ENCODE measurements at regions of chr10 and their contacts with region 1.

Region 1: DNA sequence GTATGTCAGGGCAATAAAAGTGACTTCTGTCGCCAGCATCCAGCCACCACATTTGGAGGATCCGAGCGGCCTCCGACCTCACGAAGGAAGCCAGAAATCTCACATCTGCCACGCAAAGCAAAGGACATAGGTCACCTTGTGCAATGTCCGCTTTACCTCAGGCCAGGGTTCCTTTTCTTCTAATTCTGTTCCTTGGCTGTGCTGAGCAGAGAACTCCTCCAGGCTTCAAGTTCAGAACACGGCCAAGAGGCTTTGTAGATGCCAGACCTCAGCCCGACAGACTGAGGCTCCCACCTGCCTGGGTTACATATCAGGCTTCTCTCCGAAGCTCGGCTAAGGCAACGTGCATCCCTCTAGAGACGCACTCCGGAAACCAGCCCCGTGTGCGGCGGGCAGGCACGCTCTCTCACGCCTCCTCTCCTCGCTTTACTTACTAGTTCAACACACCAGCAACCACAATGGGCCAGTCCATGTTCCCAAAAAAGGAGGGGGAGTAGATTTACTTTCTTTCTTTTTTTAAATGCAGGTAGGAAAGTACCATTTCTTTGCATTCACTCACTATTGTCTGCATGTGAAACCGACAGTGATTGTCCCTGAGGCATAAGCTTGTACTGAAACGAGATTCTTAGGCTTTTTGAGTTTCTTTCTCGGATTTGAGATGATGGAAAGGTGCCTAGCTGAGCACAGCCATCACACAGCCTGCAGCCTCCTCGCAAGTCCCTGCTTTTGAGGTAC is 122.4 kb upstream of the AFAP1L2 start:
- DNase-seq: peak; percentile 95
- H3K4me3 Mint-ChIP-seq: peak overlapping the region; percentile 94
- H3K27ac Mint-ChIP-seq: peak overlapping the region; percentile 99
- H3K4me1 Mint-ChIP-seq: peaks cover 47% of the 10 kb centered on the region
- H3K27me3 Mint-ChIP-seq: no peaks in the 10 kb centered on the region

Region 2: GRCh38 chr10:113854011-113854760 is 672.5 kb before region 1 on chr10 and contains the starts of genes DCLRE1A and NHLRC2:
- CTCF ChIA-PET with region 1: no interaction called
- intact Hi-C with region 1: loop called (anchors 5 kb)
- DNase-seq: peak; percentile 67
- H3K4me3 Mint-ChIP-seq: peak within 1 kb of the TSS; percentile 95
- H3K27ac Mint-ChIP-seq: peak within 1 kb of the TSS; percentile 98
- H3K4me1 Mint-ChIP-seq: peaks cover 35% of the 10 kb centered on the region
- H3K27me3 Mint-ChIP-seq: no peaks in the 10 kb centered on the region
- total RNA-seq, gene DCLRE1A: 8.1 to 8.7 TPM
- total RNA-seq, gene NHLRC2: 12.6 to 13.9 TPM

Region 3: GRCh38 chr10:114173921-114174694 is 352.6 kb before region 1 on chr10 and contains the start of gene CCDC186:
- CTCF ChIA-PET with region 1: no interaction called
- intact Hi-C with region 1: loop called (anchors 2 kb)
- DNase-seq: peak; percentile 99
- H3K4me3 Mint-ChIP-seq: peak within 1 kb of the TSS; percentile 98
- H3K27ac Mint-ChIP-seq: peak within 1 kb of the TSS; percentile 93
- H3K4me1 Mint-ChIP-seq: peaks cover 27% of the 10 kb centered on the region
- H3K27me3 Mint-ChIP-seq: no peaks in the 10 kb centered on the region
- total RNA-seq, gene CCDC186: 10.3 to 13.7 TPM

Region 4: GRCh38 chr10:114479307-114479706 is 47.4 kb before region 1 on chr10:
- CTCF ChIA-PET with region 1: interaction called, 11 read pairs
- intact Hi-C with region 1: no loop called
- DNase-seq: no peak
- H3K4me3 Mint-ChIP-seq: no peak overlapping the region
- H3K27ac Mint-ChIP-seq: no peak overlapping the region
- H3K4me1 Mint-ChIP-seq: peaks cover 72% of the 10 kb centered on the region
- H3K27me3 Mint-ChIP-seq: no peaks in the 10 kb centered on the region

Region 5: DNA sequence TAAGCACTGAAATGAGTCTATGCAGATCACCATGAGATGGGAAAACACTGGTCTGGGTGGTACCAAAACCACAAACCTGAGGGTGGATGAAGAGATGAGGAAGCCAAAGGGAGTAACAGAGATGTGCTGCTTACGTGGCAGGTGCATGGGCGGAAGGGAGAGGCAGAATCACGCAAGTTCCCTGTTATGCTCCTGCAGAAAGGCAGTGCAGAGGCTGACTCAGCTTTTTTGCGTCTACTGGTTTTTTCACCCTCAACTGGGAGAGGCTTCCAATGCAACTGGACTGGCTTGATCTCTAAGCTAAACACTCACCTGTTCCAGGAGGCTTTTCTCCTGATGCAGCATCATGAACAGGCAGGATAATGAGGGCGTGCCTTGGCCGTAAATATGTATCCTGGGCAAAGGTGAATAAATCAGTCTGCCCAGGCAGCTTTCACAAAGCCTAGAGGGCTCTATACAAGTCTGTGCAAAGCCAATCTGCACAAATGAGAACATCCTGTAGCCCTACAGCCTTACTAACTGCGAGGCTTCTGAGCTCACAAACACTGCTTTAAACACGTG is 27.0 kb before region 1 on chr10:
- CTCF ChIA-PET with region 1: interaction called, 36 read pairs
- intact Hi-C with region 1: loop called (anchors 1 kb)
- DNase-seq: peak; percentile 95
- H3K4me3 Mint-ChIP-seq: peak overlapping the region; percentile 56
- H3K27ac Mint-ChIP-seq: peak overlapping the region; percentile 96
- H3K4me1 Mint-ChIP-seq: peaks cover 87% of the 10 kb centered on the region
- H3K27me3 Mint-ChIP-seq: no peaks in the 10 kb centered on the region

Region 6: GRCh38 chr10:114541081-114541796 is 14.6 kb after region 1 on chr10:
- CTCF ChIA-PET with region 1: interaction called, 307 read pairs
- intact Hi-C with region 1: loop called (anchors 1 kb)
- DNase-seq: peak; percentile 87
- H3K4me3 Mint-ChIP-seq: peak overlapping the region; percentile 69
- H3K27ac Mint-ChIP-seq: peak overlapping the region; percentile 95
- H3K4me1 Mint-ChIP-seq: peaks cover 90% of the 10 kb centered on the region
- H3K27me3 Mint-ChIP-seq: no peaks in the 10 kb centered on the region

Region 7: DNA sequence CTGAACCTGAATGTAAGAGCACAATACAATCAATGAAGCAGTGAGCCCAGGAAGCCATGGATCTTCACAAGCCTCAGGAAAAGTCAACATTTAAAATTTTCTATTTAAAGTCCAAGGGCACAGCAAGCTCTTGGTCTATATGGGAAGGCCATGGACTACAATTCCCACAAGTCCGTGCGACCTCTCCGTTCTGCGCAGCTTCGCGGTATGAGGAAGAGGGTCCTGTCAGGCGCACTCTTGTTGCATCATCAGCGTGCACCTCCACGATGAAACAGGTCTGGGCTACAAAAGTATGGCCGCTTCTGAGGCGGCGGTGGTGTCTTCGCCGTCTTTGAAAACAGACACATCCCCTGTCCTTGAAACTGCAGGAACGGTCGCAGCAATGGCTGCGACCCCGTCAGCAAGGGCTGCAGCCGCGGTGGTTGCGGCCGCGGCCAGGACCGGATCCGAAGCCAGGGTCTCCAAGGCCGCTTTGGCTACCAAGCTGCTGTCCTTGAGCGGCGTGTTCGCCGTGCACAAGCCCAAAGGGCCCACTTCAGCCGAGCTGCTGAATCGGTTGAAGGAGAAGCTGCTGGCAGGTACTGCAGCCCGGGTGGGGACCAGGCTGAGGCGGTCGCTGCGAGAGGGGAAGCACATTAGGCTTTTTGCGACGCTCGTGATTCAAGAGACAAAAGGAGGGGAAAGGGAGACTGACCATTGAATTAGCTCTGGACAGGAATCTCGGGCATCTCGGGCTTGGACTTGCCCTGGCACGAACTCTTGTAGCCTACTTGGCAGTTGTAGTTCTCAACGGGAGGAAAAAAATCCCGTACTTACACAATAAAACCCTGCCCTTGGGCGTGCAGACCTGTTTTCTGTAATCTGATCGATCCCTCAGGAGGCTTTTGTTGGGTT is 411.5 kb after region 1 on chr10 and contains the start of gene TRUB1:
- CTCF ChIA-PET with region 1: no interaction called
- intact Hi-C with region 1: loop called (anchors 5 kb)
- DNase-seq: peak; percentile 97
- H3K4me3 Mint-ChIP-seq: peak within 1 kb of the TSS; percentile 95
- H3K27ac Mint-ChIP-seq: peak within 1 kb of the TSS; percentile 82
- H3K4me1 Mint-ChIP-seq: peaks cover 29% of the 10 kb centered on the region
- H3K27me3 Mint-ChIP-seq: no peaks in the 10 kb centered on the region
- total RNA-seq, gene TRUB1: 15.2 to 15.3 TPM

Measured in activated naive CD4-positive, alpha-beta T cell treated with anti-CD3 and anti-CD28 coated beads for 36 hours (primary cell).